PC-3 (cell line): ENCODE measurements at regions of chr3 and their contacts with region 1.

Region 1: GRCh38 chr3:164064298-164064697 is 1014.0 kb downstream of the SI start:
- DNase-seq: no peak
- ATAC-seq: no peak
- H3K4me3 ChIP-seq: no peak overlapping the region
- H3K27ac ChIP-seq: no peak overlapping the region
- H3K4me1 ChIP-seq: no peaks in the 10 kb centered on the region
- H3K27me3 ChIP-seq: no peaks in the 10 kb centered on the region
- CTCF ChIP-seq: no peak

Region 2: DNA sequence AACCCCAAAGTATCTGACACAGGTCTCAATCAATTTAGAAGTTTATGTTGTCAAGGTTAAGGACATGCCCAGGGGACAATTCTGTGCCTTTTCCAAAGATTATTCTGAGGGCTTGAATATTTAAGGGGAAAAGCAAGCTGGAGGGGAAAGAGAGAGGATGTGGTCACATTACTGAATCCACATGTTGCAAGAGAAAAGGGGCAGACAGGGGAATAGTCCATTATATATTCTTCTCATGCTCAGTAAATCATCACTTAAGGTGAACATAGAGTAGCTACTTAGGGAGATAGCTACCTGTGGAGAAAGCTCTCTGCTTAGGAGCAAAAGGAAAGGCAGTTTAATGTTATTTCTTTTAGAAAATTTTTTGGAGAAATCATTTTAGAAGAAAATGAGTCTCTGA is 262.4 kb after region 1 on chr3:
- CTCF ChIA-PET with region 1: no interaction called
- POLR2A ChIA-PET with region 1: interaction called, 20 read pairs
- intact Hi-C with region 1: no loop called
- DNase-seq: no peak
- ATAC-seq: no peak
- H3K4me3 ChIP-seq: no peak overlapping the region
- H3K27ac ChIP-seq: no peak overlapping the region
- H3K4me1 ChIP-seq: no peaks in the 10 kb centered on the region
- H3K27me3 ChIP-seq: no peaks in the 10 kb centered on the region
- CTCF ChIP-seq: no peak